ENCODE measurements at regions of chr1 and their contacts with region 1.

Region 1: DNA sequence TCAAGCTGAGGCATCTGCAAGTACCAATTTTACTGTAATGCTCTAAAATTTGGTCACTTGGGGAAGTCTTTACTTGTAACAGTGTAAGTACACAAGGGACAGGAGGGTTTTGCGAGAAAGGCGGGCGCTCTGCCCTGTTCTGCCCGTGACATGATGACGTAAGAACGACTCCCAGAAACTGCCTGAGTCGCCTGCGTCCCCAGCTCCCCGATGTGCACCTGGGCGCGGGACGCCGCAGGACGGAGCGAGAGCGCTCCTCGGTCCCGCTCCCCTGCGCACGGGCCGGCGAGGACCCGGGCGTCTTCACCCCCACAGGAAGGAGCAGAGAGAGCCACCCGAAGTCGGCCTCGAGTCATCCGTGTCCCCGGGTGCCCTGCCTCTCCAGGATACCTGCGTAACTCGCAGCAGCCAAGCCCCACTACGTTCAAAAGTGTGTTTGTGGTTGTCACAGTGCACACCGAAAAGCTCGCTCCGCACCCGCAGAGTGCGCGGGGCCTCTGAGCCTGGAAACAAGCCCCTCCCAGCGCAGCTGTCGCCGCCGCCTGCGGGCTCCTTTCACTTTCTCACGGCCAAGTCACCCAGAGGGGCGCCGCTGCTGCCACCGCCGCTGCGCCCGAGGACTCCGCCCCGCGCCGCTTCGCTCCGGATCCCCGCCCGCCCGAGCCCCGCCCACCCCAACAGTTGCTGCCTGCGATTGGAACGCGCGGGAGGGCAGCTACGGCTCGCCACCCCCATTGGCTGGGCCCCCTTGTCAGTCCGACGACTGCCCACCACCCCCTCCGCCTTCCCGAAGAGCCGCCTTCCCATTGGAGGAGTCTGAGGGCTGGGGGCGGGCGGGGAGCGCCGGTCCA is 3.2 kb upstream of the ZBTB18 start:
- DNase-seq: peak; percentile 97 to 99
- H3K4me3 ChIP-seq: peak overlapping the region; percentile 83 to 98
- H3K27ac ChIP-seq: peak overlapping the region; percentile 97 to 98
- H3K4me1 ChIP-seq: peaks cover 0 to 14% of the 10 kb centered on the region in 2 donors
- H3K27me3 ChIP-seq: no peaks in the 10 kb centered on the region
- CTCF ChIP-seq: no peak

Region 2: DNA sequence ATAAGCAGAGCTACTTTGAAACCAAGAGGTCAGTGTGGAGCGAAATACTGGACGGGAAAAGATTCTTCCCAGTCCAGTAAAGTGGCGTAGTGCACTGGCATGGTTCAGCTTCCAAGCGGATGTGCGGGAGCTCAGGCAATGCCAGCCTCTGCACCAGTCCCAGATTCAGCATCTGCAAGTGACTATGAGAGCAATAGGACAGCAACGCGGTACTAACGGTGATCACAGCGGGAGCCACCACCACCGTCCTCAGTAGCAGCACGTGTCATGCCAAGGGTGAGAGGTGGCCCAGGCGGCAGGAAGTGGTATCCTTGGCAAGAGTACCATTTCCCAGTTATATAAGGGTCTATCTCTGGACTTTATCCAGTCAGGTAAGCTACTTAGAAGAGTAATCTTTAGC is 1541.1 kb before region 1 on chr1:
- intact Hi-C with region 1: loop called (anchors 10 kb)
- DNase-seq: no peak
- H3K4me3 ChIP-seq: no peak overlapping the region
- H3K27ac ChIP-seq: no peak overlapping the region
- H3K4me1 ChIP-seq: no peaks in the 10 kb centered on the region
- H3K27me3 ChIP-seq: no peaks in the 10 kb centered on the region
- CTCF ChIP-seq: no peak

Region 3: GRCh38 chr1:243850452-243851256 is 197.2 kb before region 1 on chr1:
- intact Hi-C with region 1: loop called (anchors 1 kb)
- DNase-seq: peak; percentile 32 to 86
- H3K4me3 ChIP-seq: peak overlapping the region; percentile 89 to 99
- H3K27ac ChIP-seq: peak overlapping the region; percentile 96 to 97
- H3K4me1 ChIP-seq: peaks cover 0 to 8% of the 10 kb centered on the region in 2 donors
- H3K27me3 ChIP-seq: no peaks in the 10 kb centered on the region
- CTCF ChIP-seq: no peak

Region 4: DNA sequence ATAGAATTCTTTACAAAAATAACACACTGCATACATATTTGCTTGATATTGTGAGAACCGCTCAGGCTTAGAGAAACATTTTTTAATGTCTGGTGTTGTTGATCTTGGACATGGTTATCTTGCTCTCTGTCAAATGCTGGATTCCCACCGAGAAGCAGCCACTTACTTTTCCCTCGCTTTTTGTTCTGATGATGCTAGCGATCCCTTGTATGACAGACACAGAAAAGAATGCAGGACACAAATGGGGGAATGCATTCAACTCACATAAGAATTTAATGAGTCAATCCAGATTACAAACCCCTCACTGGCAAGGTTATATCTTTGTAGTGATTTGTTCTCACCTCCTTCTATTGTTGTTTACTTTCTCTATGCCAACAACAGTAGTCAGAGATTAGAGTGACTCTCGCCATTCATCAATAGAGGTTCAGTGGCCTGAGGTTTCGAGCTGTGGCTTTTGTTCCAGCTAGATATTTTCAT is 121.0 kb before region 1 on chr1:
- intact Hi-C with region 1: no loop called
- DNase-seq: no peak
- H3K4me3 ChIP-seq: peak overlapping the region; percentile 19 to 27
- H3K27ac ChIP-seq: no peak overlapping the region
- H3K4me1 ChIP-seq: peaks cover 4 to 31% of the 10 kb centered on the region in 2 donors
- H3K27me3 ChIP-seq: no peaks in the 10 kb centered on the region
- CTCF ChIP-seq: no peak

Region 5: DNA sequence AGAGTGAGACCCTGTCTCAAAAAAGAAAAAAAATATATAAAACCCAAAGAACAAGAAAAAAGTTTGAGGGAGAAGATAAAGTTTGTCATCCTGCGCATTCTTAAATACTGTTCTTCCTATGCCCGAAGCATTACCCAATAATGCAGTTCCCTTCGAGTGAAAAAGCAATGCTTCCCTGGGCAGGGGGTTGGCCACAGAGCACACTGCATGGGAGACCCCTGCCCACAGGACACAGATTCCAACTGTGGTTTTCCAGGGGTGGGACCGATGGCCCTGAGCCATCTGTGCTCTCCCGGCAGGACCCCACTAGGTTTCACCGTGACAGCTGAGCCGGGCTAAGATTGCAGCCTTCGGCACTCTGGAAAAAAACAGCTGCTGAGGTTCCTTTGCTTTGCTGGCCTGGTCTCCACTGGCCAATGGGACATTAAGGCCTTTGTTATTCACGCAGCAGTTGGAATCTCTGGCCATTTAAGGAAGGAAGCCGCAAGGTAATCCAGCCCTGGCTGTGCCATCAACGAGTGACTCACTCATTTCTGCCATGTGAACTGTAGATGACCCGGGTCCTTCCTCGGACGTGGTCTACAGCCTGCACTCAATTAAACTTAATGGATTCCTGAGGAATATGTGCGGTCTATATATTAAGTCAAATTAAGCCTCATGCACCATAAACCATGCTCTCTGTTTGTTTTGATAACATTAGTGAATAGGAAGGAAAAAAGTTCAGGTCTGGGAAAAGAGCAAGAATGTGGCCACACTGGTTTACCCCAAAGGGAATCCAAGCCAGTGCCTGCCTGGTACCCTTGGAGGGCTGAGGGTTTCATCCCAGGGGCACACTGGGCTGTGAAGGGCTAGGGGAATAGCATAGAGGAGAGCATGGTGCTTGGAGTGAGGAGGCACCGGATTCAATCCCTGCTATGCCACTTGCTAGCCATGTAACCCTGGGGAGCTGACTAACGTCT is 166.4 kb after region 1 on chr1:
- intact Hi-C with region 1: loop called (anchors 5 kb)
- DNase-seq: no peak
- H3K4me3 ChIP-seq: no peak overlapping the region
- H3K27ac ChIP-seq: no peak overlapping the region
- H3K4me1 ChIP-seq: peaks cover 0 to 14% of the 10 kb centered on the region in 2 donors
- H3K27me3 ChIP-seq: no peaks in the 10 kb centered on the region
- CTCF ChIP-seq: no peak

Region 6: DNA sequence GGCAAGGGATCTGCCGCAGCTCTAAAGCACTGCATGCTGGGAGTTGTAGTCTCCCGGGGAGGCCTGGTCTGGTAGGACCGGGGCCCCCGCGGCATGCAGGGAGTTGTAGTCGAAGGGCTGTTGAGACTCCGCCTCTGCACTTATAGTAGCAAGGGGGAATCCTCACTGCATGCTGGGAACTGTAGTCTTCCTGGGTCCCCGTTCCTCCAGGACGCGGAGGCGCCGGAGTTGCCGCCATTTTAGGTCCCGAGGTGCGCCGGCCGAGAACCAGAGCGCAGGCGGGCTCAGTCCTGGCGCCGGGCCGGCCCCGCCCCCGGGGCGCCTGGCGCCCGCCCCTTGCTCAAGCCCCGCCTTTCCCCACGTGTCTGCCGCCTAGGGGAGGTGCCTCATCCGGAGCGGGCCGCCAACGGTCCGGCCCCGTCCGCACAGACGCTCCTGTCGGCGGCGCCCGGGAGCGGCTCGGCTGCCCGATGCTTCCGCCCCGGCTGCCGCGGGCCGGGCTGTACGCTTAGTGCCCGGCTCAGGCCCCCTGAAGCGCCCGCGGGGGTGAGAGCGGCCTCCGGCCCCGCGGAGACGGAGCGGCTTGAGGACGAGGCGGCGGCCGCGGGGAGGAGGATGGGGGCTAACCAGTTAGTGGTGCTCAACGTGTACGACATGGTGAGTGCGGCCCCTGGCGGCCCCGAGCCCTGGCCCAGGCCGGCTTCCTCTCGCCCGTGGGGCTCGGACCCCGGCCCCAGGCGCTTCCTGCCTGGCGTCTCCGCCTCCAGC is 605.0 kb after region 1 on chr1 and contains the start of gene DESI2:
- intact Hi-C with region 1: loop called (anchors 5 kb)
- DNase-seq: peak; percentile 99 to 100
- H3K4me3 ChIP-seq: peak within 1 kb of the TSS; percentile 72 to 95
- H3K27ac ChIP-seq: peak within 1 kb of the TSS; percentile 93 to 99
- H3K4me1 ChIP-seq: peaks cover 0 to 25% of the 10 kb centered on the region in 2 donors
- H3K27me3 ChIP-seq: no peaks in the 10 kb centered on the region
- CTCF ChIP-seq: peak; percentile 45 to 58 (median 55)
- total RNA-seq, gene DESI2: 24.2 TPM

Region 7: DNA sequence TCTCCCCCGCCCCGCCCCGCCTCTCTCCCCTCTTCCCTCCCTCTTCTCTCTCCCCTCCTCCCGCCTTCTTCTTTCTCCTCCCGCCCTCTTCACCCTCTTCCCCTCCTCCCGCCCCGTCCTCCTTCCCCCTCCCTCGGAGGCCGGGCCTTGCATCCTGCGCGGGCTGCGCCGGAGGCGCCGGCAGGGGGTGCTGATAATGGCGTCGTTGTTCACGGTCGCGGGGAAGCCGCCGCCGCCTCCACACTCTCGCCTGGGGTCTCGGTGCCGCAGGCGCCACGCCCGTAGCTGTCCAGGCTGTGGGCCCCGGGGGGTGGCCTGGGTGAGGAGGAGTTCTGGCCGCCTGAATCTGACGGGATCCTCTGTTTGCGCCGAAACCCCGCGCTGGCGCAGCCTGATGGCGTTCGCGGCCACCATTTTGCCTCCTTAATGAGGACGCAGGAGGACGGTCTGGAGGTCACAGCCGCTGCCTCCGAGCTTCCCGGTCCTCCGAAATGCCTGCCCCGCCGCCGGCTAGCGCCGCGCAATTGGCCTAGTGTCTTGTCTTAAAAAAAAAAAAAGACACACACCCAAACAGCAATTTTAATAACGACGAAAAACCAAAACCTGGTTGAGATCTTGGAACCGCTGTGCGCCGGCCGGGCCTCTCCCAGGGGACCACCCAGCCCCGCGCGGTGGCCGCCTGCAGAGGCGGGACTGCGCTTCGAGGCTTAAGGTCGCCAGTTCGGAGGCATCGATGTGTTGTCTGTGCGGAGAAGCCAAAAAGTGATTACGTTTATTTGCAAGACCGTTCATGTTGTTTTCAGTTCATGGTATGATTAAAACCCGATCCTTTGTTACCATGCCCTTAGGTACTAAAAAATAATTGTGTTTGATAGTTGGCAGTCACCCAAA is 923.1 kb after region 1 on chr1:
- intact Hi-C with region 1: loop called (anchors 5 kb)
- DNase-seq: peak; percentile 69 to 95
- H3K4me3 ChIP-seq: peak overlapping the region; percentile 73 to 80
- H3K27ac ChIP-seq: peak overlapping the region; percentile 99
- H3K4me1 ChIP-seq: peaks cover 0 to 9% of the 10 kb centered on the region in 2 donors
- H3K27me3 ChIP-seq: no peaks in the 10 kb centered on the region
- CTCF ChIP-seq: peak; percentile 46 to 78 (median 69)

Measured in ascending aorta (tissue), 2 donors.